Vagina (tissue), 2 donors: ENCODE measurements at regions of chr3 and their contacts with region 1.

Region 1: DNA sequence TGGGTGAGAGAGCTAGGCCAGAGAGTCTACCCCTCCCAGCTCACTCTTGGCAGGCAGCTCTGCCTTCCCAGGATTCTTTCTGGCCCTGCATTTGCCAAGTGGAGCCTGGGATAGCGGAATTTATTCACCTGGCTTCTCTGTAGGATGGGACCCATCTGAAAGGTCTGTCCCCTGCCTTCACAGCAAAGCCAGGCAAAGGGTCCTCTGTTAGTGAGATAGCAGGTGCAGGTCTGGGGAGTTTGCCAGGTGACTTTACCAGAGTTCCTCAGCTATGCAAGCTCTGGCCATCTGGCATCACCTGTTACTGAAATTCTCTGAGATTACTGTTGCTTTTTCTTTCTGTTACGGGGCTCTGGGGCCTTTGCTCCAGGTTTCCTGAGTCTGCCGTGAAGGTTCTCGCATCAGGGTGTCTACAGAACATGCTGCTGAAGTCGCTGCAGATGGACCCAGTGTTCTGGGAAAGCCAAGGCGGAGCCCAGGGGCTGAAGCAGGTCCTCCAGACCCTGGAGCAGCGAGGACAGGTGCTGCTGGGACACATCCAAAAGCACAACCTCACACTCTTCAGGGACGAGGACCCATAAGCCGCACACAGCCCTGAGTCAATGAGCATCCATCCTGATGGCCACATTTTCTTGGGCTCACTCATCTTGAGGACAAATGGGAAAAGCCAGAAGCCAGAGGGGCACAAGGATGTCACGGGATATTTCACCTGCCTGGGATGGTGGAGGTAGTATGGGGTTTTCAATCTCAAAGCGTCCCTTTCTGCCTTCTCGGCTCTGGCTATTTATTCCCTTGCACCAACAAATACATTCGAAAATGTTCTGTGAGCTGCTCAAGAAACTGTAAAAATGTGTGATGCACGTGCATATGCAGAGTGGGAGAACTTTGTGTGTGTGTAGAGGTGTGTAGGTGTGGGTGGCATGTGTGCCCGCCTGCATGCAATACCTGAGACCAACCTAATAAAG is 49.8 kb downstream of the POMGNT2 start:
- DNase-seq: peak; percentile 77 to 87
- H3K4me3 ChIP-seq: no peak overlapping the region
- H3K27ac ChIP-seq: no peak overlapping the region
- H3K4me1 ChIP-seq: no peaks in the 10 kb centered on the region
- H3K27me3 ChIP-seq: no peaks in the 10 kb centered on the region
- CTCF ChIP-seq: no peak
- POLR2A ChIP-seq: no peak

Region 2: DNA sequence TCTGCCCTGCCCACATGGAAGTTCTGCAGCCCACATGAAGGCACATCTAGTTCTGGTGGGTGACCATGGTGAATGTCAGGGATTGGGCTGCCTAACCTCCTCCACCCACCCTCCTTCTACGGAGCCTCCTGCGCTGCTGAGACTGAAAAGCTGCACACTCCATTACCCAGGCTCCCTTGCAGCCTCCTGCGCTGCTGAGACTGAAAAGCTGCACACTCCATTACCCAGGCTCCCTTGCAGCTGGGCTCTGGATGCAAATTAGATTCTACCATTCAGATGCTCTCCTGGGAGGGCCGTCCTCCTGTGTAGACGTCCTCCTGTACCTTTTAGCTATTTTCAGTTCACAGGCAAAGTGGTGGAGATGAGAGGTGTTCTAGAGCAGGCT is 17.7 kb after region 1 on chr3:
- intact Hi-C with region 1: loop called (anchors 2 kb)
- DNase-seq: peak in 1 of 2 donors; percentile 76
- H3K4me3 ChIP-seq: no peak overlapping the region
- H3K27ac ChIP-seq: no peak overlapping the region
- H3K4me1 ChIP-seq: no peaks in the 10 kb centered on the region
- H3K27me3 ChIP-seq: no peaks in the 10 kb centered on the region
- CTCF ChIP-seq: no peak
- POLR2A ChIP-seq: no peak